PC-9 (cell line): ENCODE measurements at regions of chr7 and their contacts with region 1.

Region 1: DNA sequence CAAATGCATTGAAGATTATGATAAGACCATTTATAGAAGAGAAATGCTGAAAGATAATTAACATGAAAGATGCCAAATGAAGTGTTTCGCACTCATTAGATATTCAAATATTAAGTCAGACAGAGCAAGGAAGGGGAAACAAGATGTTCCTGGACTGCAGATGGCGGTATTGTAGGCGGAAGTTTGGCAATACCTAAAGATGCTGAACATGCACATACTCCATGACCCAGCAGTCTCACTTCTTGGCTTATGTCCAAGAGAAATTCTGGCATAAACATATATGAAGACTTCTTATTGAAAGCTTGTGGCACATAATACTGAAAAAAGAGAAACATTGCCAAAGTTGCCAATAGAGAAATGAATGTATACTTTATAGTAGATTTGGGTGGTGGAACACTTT is 325.4 kb upstream of the SEMA3C start:
- DNase-seq: no peak
- H3K4me3 ChIP-seq: no peak overlapping the region
- H3K27ac ChIP-seq: no peak overlapping the region
- H3K4me1 ChIP-seq: no peaks in the 10 kb centered on the region
- H3K27me3 ChIP-seq: no peaks in the 10 kb centered on the region
- CTCF ChIP-seq: no peak

Region 2: DNA sequence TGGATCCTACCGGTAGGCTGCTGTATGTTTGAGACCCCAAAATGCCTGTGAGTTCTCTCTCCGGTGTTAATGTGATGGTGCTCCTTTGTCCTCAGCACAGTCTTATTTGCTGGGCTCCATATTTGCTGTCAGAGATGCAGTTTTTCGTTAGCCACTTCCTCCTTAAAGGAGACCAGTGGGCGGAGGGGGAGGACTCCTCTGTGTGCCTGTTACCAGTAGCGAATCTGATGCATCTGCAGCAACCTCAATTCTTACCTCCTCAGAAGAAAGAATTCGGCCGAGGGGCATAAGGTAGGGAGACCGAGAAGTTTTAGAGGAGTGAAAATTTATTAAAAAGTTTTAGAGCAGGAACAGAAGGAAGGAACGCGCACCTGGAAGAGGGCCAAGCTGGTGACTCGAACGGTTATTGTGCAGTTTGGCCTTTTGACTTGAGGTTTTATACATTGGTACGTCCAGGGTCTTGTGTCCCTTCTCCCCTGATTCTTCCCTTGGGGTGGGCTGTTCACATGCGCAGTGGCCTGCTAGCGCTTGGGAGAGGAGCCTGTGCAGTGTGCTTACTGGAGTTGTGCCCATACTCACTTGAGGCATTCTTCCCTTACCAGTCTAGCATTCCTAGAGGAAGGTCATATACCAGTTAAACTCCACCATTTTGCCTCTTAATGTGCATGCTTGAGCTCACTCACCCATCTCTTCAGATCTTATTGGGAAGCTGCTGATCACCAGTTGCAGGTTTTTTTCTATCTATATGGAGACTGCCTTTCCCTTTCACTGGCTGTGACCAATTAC is 1060.1 kb before region 1 on chr7:
- CTCF ChIA-PET with region 1: no interaction called
- POLR2A ChIA-PET with region 1: no interaction called
- intact Hi-C with region 1: no loop called
- DNase-seq: no peak
- H3K4me3 ChIP-seq: no peak overlapping the region
- H3K27ac ChIP-seq: no peak overlapping the region
- H3K4me1 ChIP-seq: no peaks in the 10 kb centered on the region
- H3K27me3 ChIP-seq: no peaks in the 10 kb centered on the region
- CTCF ChIP-seq: no peak

Region 3: GRCh38 chr7:81221527-81222217 is 22.6 kb before region 1 on chr7:
- CTCF ChIA-PET with region 1: no interaction called
- POLR2A ChIA-PET with region 1: no interaction called
- intact Hi-C with region 1: no loop called
- DNase-seq: no peak
- H3K4me3 ChIP-seq: no peak overlapping the region
- H3K27ac ChIP-seq: no peak overlapping the region
- H3K4me1 ChIP-seq: no peaks in the 10 kb centered on the region
- H3K27me3 ChIP-seq: no peaks in the 10 kb centered on the region
- CTCF ChIP-seq: no peak

Region 4: GRCh38 chr7:81232084-81232799 is 12.0 kb before region 1 on chr7:
- CTCF ChIA-PET with region 1: interaction called, 11 read pairs
- POLR2A ChIA-PET with region 1: no interaction called
- intact Hi-C with region 1: no loop called
- DNase-seq: no peak
- H3K4me3 ChIP-seq: no peak overlapping the region
- H3K27ac ChIP-seq: no peak overlapping the region
- H3K4me1 ChIP-seq: no peaks in the 10 kb centered on the region
- H3K27me3 ChIP-seq: no peaks in the 10 kb centered on the region
- CTCF ChIP-seq: no peak

Region 5: DNA sequence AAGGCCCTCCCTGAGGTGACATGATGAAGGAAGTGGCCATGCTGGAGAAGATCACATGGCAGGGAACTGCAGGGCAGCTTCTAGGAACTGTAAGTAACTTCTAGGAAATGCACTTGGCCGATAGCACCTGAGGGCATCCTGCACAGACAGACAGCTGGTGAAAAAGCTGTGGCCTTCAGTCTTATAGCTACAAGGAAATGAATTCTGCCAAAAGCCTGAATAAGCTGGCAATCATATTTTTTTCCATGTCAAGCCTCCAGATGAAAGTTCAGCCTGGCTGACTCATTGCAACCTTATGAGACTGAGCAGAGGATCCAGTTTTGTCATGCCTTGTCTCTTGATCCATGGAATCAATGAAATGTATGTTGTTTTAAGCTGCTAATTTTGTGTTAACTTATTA is 1290.5 kb after region 1 on chr7:
- CTCF ChIA-PET with region 1: no interaction called
- POLR2A ChIA-PET with region 1: no interaction called
- intact Hi-C with region 1: no loop called
- DNase-seq: peak; percentile 65 to 94
- H3K4me3 ChIP-seq: no peak overlapping the region
- H3K27ac ChIP-seq: no peak overlapping the region
- H3K4me1 ChIP-seq: 0 out of 2 replicates have a peak, but pooled peaks cover 5% of the 10 kb centered on the region
- H3K27me3 ChIP-seq: no peaks in the 10 kb centered on the region
- CTCF ChIP-seq: no peak